ENCODE measurements at regions of chr11 and their contacts with region 1.

Region 1: DNA sequence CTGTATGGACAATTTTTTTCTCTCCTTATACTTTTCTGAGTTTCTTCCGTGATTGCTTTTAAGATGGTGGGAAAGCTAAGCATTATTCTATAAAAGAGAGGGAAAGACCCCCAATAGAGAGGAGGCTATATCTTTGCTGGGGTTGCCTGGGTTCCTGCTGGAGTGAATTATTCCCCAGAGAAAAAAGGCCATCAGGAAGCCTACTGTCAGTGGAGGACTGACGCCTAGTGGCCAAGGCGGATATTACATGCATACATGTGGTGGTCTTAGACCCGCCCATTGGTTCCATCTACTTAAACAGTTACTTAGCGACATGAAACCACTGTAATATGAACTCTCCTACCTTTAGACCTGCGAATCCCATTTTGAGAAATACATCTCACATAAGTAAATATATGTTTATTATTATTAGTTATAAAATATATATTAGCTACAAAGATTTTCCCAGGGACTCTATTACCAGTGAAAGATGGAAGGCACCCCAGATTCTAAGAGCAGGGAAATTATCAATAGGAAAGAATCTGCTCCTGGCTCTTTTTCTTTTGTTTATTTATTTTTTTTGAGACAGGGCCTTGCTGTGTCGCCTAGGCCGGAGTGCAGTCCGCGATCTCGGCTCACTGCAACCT is 15.7 kb upstream of the PGA3 start:
- DNase-seq: peak; percentile 38 to 81 (median 65)
- ATAC-seq: peak; percentile 97
- H3K4me3 ChIP-seq: no peak overlapping the region
- H3K27ac ChIP-seq: no peak overlapping the region
- H3K4me1 ChIP-seq: no peaks in the 10 kb centered on the region
- H3K27me3 ChIP-seq: peaks cover 0 to 30% of the 10 kb centered on the region in 2 donors
- CTCF ChIP-seq: peak; percentile 92 to 94

Region 2: DNA sequence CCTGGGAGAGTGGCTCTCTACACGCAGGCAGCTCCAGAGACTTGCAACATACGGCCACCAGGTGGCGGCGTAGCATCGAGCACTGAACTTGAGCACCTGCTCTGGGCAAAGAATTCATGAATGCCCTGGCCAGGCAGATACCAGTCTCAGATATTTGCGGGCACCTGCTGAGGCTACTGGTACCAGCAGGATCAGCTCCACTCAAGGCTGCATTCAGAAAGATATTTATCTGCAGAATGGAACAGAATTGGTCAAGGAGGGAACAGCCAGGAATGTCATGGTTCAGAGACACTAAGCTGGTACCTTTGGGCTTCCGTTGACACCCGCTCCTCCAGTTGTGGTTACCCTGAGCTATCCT is 356.5 kb before region 1 on chr11:
- intact Hi-C with region 1: loop called in 1 of 2 experiments (anchors 10 kb)
- DNase-seq: peak; percentile 53 to 93 (median 81)
- ATAC-seq: peak; percentile 97
- H3K4me3 ChIP-seq: no peak overlapping the region
- H3K27ac ChIP-seq: no peak overlapping the region
- H3K4me1 ChIP-seq: peaks cover 0 to 13% of the 10 kb centered on the region in 2 donors
- H3K27me3 ChIP-seq: peaks cover 11 to 86% of the 10 kb centered on the region in 2 donors
- CTCF ChIP-seq: peak; percentile 92 to 96

Measured in left lung (tissue), 14 donors.